ENCODE measurements at regions of chr12 and their contacts with region 1.

Region 1: GRCh38 chr12:78470354-78471195 is 394.0 kb upstream of the SYT1 start:
- DNase-seq: peak; percentile 83
- H3K4me3 ChIP-seq: no peak overlapping the region
- H3K27ac ChIP-seq: no peak overlapping the region
- H3K4me1 ChIP-seq: peaks cover 36% of the 10 kb centered on the region
- H3K27me3 ChIP-seq: no peaks in the 10 kb centered on the region
- CTCF ChIP-seq: peak; percentile 88

Region 2: GRCh38 chr12:78260976-78261375 is 209.6 kb before region 1 on chr12:
- CTCF ChIA-PET with region 1: no interaction called
- POLR2A ChIA-PET with region 1: interaction called, 11 read pairs
- intact Hi-C with region 1: no loop called
- DNase-seq: no peak
- H3K4me3 ChIP-seq: no peak overlapping the region
- H3K27ac ChIP-seq: no peak overlapping the region
- H3K4me1 ChIP-seq: no peaks in the 10 kb centered on the region
- H3K27me3 ChIP-seq: peaks cover 7% of the 10 kb centered on the region
- CTCF ChIP-seq: no peak

Region 3: DNA sequence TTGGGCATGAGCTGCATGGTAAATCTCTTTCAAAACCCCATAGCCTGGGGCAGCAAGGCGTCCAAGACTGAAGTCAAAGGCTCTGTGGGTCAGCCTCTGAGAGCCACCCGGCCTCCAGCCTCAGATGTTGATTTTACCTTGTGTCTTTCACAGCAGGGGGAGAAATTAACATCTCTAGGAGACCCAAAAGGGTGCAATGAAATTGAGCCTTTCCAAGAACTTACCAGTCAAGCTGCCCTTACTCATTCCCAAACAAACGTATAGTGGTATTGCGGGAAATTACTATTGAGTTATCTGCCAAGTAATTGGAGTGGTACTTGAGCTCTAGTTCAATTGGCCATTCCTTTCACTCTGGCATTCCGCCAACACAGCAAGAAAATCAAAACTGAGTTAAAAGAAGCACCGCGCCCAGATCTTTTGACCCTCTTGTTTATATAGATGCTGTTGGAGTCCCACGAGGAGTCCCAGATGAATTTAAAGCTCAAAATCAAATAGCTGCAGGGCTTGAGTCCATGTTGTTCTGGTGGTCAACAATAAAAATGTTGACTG is 13.3 kb after region 1 on chr12:
- CTCF ChIA-PET with region 1: no interaction called
- POLR2A ChIA-PET with region 1: no interaction called
- intact Hi-C with region 1: no loop called
- DNase-seq: no peak
- H3K4me3 ChIP-seq: no peak overlapping the region
- H3K27ac ChIP-seq: no peak overlapping the region
- H3K4me1 ChIP-seq: no peaks in the 10 kb centered on the region
- H3K27me3 ChIP-seq: no peaks in the 10 kb centered on the region
- CTCF ChIP-seq: no peak

Region 4: DNA sequence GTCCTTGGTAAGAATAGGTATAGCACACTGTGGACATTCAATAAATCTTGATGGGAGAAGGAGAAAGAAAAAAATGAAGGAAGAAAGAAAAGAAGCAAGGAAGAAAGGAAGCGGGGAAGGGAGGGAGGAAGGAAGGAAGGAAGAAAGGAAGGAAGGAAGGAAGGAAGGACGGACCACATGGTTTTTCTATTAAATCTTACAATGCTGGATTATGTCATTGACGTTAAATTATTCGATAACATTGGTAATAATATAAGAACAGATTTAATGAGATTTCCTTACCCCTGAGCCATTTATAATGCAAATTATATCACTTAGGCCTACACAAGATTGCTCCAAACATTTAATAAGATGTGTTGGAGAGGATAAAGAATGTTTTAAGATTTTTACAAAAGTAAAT is 269.1 kb after region 1 on chr12:
- CTCF ChIA-PET with region 1: no interaction called
- POLR2A ChIA-PET with region 1: no interaction called
- intact Hi-C with region 1: loop called (anchors 5 kb)
- DNase-seq: peak; percentile 89
- H3K4me3 ChIP-seq: peak overlapping the region; percentile 5
- H3K27ac ChIP-seq: peak overlapping the region; percentile 95
- H3K4me1 ChIP-seq: peaks cover 59% of the 10 kb centered on the region
- H3K27me3 ChIP-seq: no peaks in the 10 kb centered on the region
- CTCF ChIP-seq: no peak

Region 5: GRCh38 chr12:78863482-78864402 is 393.2 kb after region 1 on chr12:
- CTCF ChIA-PET with region 1: interaction called, 8 read pairs
- POLR2A ChIA-PET with region 1: interaction called, 3 read pairs
- intact Hi-C with region 1: loop called (anchors 5 kb)
- DNase-seq: peak; percentile 83
- H3K4me3 ChIP-seq: peak overlapping the region; percentile 75
- H3K27ac ChIP-seq: peak overlapping the region; percentile 60
- H3K4me1 ChIP-seq: peaks cover 17% of the 10 kb centered on the region
- H3K27me3 ChIP-seq: no peaks in the 10 kb centered on the region
- CTCF ChIP-seq: no peak

Region 6: GRCh38 chr12:79006306-79006705 is 535.7 kb after region 1 on chr12:
- CTCF ChIA-PET with region 1: no interaction called
- POLR2A ChIA-PET with region 1: no interaction called
- intact Hi-C with region 1: loop called (anchors 10 kb)
- DNase-seq: peak; percentile 43
- H3K4me3 ChIP-seq: no peak overlapping the region
- H3K27ac ChIP-seq: peak overlapping the region; percentile 4
- H3K4me1 ChIP-seq: peaks cover 50% of the 10 kb centered on the region
- H3K27me3 ChIP-seq: no peaks in the 10 kb centered on the region
- CTCF ChIP-seq: peak; percentile 59

Region 7: GRCh38 chr12:79162949-79163348 is 692.4 kb after region 1 on chr12:
- CTCF ChIA-PET with region 1: no interaction called
- POLR2A ChIA-PET with region 1: no interaction called
- intact Hi-C with region 1: loop called (anchors 10 kb)
- DNase-seq: peak; percentile 42
- H3K4me3 ChIP-seq: no peak overlapping the region
- H3K27ac ChIP-seq: peak overlapping the region; percentile 15
- H3K4me1 ChIP-seq: peaks cover 17% of the 10 kb centered on the region
- H3K27me3 ChIP-seq: no peaks in the 10 kb centered on the region
- CTCF ChIP-seq: peak; percentile 25; the same call in 1 of the 2 replicates

Region 8: DNA sequence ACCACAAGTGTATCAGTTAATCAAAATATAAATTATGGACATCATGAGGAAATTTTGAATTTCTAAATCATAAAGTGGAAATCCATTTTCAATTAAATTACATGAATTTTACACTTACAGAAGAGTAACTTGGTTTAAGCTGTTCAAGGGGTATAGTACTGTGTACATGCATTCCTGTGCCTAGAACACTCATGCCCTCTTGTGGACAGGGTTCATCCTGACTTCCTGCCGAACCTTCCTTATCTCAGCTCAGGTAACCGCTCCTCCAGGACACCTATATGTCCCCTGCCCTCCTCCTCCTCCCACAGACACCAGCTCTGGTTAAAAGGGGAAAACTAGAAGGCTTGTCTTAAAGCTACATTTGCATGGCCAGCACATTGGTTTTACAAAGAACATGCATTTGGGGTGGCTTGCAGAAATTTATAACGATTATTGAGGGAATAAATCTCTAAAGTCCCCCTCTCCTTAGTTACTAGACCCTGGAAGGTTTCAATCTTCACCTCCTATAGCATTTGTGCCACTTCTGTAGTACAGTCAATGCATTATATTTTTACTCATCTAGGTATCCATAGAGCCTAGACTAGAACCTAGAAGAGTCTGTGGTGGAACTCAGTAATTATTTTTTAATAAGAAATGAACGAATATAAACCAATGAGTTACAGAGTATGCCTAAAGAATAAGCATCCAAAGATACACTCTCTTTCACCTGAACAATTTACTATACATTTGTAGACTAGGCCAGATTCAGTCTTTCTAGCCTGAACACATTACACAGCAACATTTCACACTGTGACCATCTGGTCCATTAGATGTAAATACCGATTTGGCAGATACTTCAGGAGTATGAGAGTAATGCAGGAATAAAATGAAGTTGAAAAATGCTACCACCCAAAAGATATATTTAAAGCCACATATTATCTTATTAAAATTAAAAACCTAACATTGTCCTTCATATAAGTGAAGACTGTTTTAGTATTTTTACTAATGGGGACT is 874.6 kb after region 1 on chr12:
- CTCF ChIA-PET with region 1: no interaction called
- POLR2A ChIA-PET with region 1: no interaction called
- intact Hi-C with region 1: loop called (anchors 10 kb)
- DNase-seq: peak; percentile 55
- H3K4me3 ChIP-seq: no peak overlapping the region
- H3K27ac ChIP-seq: no peak overlapping the region
- H3K4me1 ChIP-seq: peaks cover 2% of the 10 kb centered on the region
- H3K27me3 ChIP-seq: no peaks in the 10 kb centered on the region
- CTCF ChIP-seq: peak; percentile 64

Measured in A673 (cell line).